Caco-2 (cell line): ENCODE measurements at regions of chr20 and their contacts with region 1.

Region 1: GRCh38 chr20:59940174-59940971 is at the starts of genes FAM217B and PPP1R3D:
- DNase-seq: peak; percentile 99 to 100
- H3K4me3 ChIP-seq: peak within 1 kb of the TSS; percentile 75
- H3K4me3 Mint-ChIP-seq: peak within 1 kb of the TSS; percentile 99
- H3K27ac Mint-ChIP-seq: peak within 1 kb of the TSS; percentile 97
- H3K4me1 ChIP-seq: peaks cover 13% of the 10 kb centered on the region
- H3K4me1 Mint-ChIP-seq: peaks cover 23% of the 10 kb centered on the region
- H3K27me3 ChIP-seq: no peaks in the 10 kb centered on the region
- H3K27me3 Mint-ChIP-seq: no peaks in the 10 kb centered on the region
- CTCF ChIP-seq: peak; percentile 41 to 50
- total RNA-seq, gene FAM217B: 60.3 and 65.3 TPM in 2 replicates
- total RNA-seq, gene PPP1R3D: 10.4 TPM in 2 replicates

Region 2: DNA sequence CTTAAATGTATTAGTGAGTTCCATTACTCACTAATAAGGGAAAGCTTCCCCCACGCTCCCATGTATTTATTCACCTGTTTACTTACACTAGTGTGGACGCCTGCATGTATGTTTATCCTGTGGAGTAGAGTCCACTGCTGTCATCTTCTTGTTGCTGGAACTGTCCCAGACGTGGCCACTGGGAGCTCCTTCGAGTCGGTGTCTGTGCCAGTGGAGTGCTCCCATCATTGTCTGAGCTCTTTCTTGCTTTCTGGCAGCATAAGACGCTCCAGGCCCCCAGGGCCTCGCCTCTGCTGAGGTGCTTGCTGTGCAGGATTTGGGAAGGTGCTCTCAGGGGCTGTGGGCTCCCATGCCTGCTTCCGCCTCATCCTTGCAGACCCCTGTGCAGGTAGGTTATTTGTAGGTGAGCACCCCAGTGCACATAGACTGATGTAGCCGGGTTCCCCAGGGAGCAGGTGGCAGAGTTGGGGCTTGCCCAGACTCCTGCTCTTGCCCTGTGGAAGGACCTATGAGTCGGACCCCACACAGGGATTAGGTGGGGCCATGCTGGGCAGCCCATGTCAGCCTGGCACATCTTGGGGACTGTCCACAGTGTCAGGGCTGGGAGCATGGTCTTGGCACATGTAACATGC is 319.4 kb before region 1 on chr20:
- CTCF ChIA-PET with region 1: no interaction called
- POLR2A ChIA-PET with region 1: no interaction called
- intact Hi-C with region 1: no loop called
- DNase-seq: no peak
- H3K4me3 ChIP-seq: no peak overlapping the region
- H3K4me3 Mint-ChIP-seq: no peak overlapping the region
- H3K27ac Mint-ChIP-seq: no peak overlapping the region
- H3K4me1 ChIP-seq: no peaks in the 10 kb centered on the region
- H3K4me1 Mint-ChIP-seq: no peaks in the 10 kb centered on the region
- H3K27me3 ChIP-seq: no peaks in the 10 kb centered on the region; the same call in 1 of the 2 replicates
- H3K27me3 Mint-ChIP-seq: peaks cover 57% of the 10 kb centered on the region
- CTCF ChIP-seq: peak; percentile 11 to 13

Region 3: DNA sequence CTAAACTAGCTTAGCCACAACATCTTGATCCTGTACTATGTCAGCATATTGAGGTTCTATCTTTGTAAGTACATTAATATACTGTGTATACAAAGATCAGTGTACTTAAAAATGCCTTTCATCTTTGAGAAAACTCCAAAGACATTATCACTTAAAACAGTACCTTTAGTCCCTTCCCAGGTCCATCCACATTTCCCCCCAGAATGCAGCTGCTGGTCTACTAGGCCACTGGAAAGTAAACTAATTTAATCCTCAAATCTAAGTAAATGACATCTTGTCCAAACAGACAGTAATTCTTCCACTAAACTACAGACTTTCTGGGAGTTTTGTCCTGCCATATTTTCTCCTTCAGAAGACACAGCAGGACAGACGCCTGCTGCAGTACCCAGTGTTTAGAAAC is 75.6 kb before region 1 on chr20:
- CTCF ChIA-PET with region 1: interaction called, 3 read pairs
- POLR2A ChIA-PET with region 1: interaction called, 5 read pairs
- intact Hi-C with region 1: loop called (anchors 2 kb)
- DNase-seq: peak; percentile 77 to 84
- H3K4me3 ChIP-seq: no peak overlapping the region
- H3K4me3 Mint-ChIP-seq: peak overlapping the region; percentile 23
- H3K27ac Mint-ChIP-seq: no peak overlapping the region
- H3K4me1 ChIP-seq: peaks cover 15% of the 10 kb centered on the region
- H3K4me1 Mint-ChIP-seq: peaks cover 8% of the 10 kb centered on the region
- H3K27me3 ChIP-seq: no peaks in the 10 kb centered on the region
- H3K27me3 Mint-ChIP-seq: peaks cover 3% of the 10 kb centered on the region
- CTCF ChIP-seq: no peak

Region 4: DNA sequence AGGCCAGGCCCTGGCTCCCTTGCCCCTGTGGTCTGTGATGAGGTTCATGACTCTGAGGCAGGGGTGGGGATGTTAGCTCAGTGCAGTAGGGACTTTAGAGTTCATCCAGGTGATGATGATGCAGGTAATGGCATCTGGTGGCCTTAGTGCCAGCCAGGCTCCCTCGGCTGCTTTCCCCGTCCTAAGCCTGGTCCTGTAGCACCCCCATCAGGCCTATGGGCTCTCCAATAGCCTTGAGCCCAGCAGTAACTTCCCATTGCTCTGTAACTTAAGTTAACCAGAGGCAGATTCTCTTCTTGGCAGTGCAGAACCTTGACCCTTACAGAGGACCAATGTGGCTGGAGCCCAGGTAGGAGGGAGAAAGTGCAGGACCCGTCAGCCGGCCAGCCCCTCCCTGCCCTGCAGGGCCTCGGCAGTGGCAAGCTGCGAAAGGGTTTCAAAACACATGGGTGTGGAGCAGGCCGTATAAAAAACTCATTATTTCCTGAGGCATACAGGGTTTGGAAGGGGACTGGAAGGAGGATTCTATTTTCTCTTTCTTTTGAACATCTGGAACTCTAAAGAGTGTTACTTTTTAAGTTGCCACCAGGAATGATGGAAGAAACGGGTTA is 424.8 kb after region 1 on chr20:
- CTCF ChIA-PET with region 1: no interaction called
- POLR2A ChIA-PET with region 1: no interaction called
- intact Hi-C with region 1: loop called (anchors 10 kb)
- DNase-seq: peak in 1 of 2 experiments; percentile 40
- H3K4me3 ChIP-seq: no peak overlapping the region
- H3K4me3 Mint-ChIP-seq: no peak overlapping the region
- H3K27ac Mint-ChIP-seq: no peak overlapping the region
- H3K4me1 ChIP-seq: no peaks in the 10 kb centered on the region
- H3K4me1 Mint-ChIP-seq: no peaks in the 10 kb centered on the region
- H3K27me3 ChIP-seq: no peaks in the 10 kb centered on the region; the same call in none of the 2 replicates
- H3K27me3 Mint-ChIP-seq: peaks cover 12% of the 10 kb centered on the region
- CTCF ChIP-seq: peak in 1 of 2 experiments; percentile 33